Activated T-helper 1 cell treated with anti-CD3 and anti-CD28 coated beads, Interleukin-12 subunit alpha, Interleukin-12 subunit beta, Interleukin-2, Interleukin-4 antibody, amounts not matched to agents 30 ng/mL and 10 ng/mL and 1 ng/mL, durations not matched to agents 14 hours and 24 hours and 36 hours (primary cell): ENCODE measurements at regions of chr5 and their contacts with region 1.

Region 1: GRCh38 chr5:94793113-94793815 is 174.8 kb downstream of the SLF1 start:
- DNase-seq: peak; percentile 47
- H3K4me3 Mint-ChIP-seq: peak overlapping the region; percentile 64
- H3K27ac Mint-ChIP-seq: peak overlapping the region; percentile 94
- H3K4me1 Mint-ChIP-seq: peaks cover 67% of the 10 kb centered on the region
- H3K27me3 Mint-ChIP-seq: no peaks in the 10 kb centered on the region

Region 2: GRCh38 chr5:93874080-93874479 is 919.2 kb before region 1 on chr5:
- intact Hi-C with region 1: loop called (anchors 1 kb)
- DNase-seq: no peak
- H3K4me3 Mint-ChIP-seq: no peak overlapping the region
- H3K27ac Mint-ChIP-seq: peak overlapping the region; percentile 27
- H3K4me1 Mint-ChIP-seq: peaks cover 15% of the 10 kb centered on the region
- H3K27me3 Mint-ChIP-seq: no peaks in the 10 kb centered on the region

Region 3: GRCh38 chr5:94389515-94389899 is 403.8 kb before region 1 on chr5:
- intact Hi-C with region 1: loop called (anchors 1 kb)
- DNase-seq: no peak
- H3K4me3 Mint-ChIP-seq: no peak overlapping the region
- H3K27ac Mint-ChIP-seq: peak overlapping the region; percentile 92
- H3K4me1 Mint-ChIP-seq: peaks cover 16% of the 10 kb centered on the region
- H3K27me3 Mint-ChIP-seq: no peaks in the 10 kb centered on the region

Region 4: DNA sequence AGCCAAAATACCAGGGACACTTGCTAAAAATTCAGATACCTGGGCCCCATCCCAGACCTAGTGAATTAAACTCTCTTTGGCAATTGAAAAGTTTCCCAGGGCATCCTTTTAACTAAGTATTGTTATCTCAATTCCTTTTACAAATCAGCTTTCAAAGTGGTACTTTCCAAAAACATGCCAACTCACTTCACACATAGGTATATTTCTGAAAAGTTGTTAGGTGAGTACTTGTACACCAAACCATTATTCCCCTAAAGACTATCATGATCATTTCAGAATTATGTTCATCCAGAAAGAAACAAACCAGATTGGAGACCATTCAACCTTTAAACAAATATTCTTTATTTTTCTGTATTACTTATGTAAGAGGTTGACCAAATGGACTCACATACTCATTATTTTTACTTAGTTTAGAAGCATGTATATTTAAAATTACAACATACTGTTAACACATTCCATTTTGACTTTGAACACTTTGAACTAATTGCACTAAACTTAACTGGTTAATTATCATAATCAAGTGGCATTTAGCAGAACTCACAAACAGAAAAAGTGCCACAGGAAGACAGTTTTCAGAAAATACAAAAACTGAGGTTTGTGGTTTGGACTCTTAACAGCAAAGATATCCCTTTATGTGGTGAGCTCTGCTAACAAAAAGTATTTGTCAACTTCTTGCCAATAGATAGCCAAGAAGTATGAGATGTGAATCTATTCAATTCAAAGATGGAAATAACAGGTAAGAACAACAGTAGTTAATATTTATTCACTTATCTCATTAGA is 215.6 kb before region 1 on chr5:
- intact Hi-C with region 1: loop called (anchors 2 kb)
- DNase-seq: peak; percentile 13
- H3K4me3 Mint-ChIP-seq: peak overlapping the region; percentile 12
- H3K27ac Mint-ChIP-seq: peak overlapping the region; percentile 59
- H3K4me1 Mint-ChIP-seq: peaks cover 62% of the 10 kb centered on the region
- H3K27me3 Mint-ChIP-seq: no peaks in the 10 kb centered on the region

Region 5: GRCh38 chr5:94700592-94700991 is 92.7 kb before region 1 on chr5:
- intact Hi-C with region 1: loop called (anchors 1 kb)
- DNase-seq: no peak
- H3K4me3 Mint-ChIP-seq: no peak overlapping the region
- H3K27ac Mint-ChIP-seq: peak overlapping the region; percentile 61
- H3K4me1 Mint-ChIP-seq: peaks cover 15% of the 10 kb centered on the region
- H3K27me3 Mint-ChIP-seq: no peaks in the 10 kb centered on the region

Region 6: GRCh38 chr5:94832685-94833084 is 39.4 kb after region 1 on chr5:
- intact Hi-C with region 1: loop called (anchors 2 kb)
- DNase-seq: no peak
- H3K4me3 Mint-ChIP-seq: no peak overlapping the region
- H3K27ac Mint-ChIP-seq: no peak overlapping the region
- H3K4me1 Mint-ChIP-seq: peaks cover 16% of the 10 kb centered on the region
- H3K27me3 Mint-ChIP-seq: peaks cover 7% of the 10 kb centered on the region